Thyroid gland (tissue), 4 donors: ENCODE measurements at regions of chr14 and their contacts with region 1.

Region 1: DNA sequence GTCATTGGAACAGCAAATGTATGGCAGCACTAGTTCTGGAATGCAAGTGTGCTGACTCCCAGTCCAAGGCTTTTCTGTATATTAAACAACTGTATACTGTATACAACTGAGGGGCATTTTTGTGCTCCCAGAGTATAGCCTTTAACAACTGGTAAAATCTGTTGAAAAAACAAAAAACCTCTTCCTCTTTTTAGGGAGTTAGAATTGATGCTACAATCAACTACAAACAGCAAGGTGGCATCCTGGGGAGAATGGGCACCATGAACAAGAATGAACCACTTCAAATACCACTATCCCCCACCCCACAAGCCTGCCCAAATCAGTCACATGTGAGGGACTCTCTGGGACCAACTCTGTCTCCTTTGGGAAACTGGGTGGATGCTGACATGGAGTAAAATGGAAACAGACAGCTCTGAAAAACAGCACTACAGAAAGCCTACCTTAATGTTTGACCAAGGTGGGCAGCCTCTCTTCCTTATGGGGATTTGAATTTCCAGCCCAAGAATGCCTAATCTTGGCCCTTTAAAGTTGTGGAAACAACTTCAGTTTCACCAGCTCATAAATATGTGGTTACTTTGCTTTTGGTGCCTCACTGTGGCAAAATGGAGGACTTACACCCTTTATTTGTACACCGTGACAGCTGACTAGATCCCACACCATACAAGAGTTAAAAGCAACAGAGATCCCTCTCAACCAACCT is 7.5 kb downstream of the VTI1B start:
- DNase-seq: peak; percentile 34 to 35
- H3K4me3 ChIP-seq: no peak overlapping the region
- H3K27ac ChIP-seq: peak overlapping the region in 2 of 3 donors; percentile 43 to 60
- H3K4me1 ChIP-seq: peaks cover 11 to 19% of the 10 kb centered on the region in 2 donors
- H3K27me3 ChIP-seq: no peaks in the 10 kb centered on the region
- CTCF ChIP-seq: peak in 5 of 6 experiments; percentile 30 to 93 (median 84)
- POLR2A ChIP-seq: no peak

Region 2: DNA sequence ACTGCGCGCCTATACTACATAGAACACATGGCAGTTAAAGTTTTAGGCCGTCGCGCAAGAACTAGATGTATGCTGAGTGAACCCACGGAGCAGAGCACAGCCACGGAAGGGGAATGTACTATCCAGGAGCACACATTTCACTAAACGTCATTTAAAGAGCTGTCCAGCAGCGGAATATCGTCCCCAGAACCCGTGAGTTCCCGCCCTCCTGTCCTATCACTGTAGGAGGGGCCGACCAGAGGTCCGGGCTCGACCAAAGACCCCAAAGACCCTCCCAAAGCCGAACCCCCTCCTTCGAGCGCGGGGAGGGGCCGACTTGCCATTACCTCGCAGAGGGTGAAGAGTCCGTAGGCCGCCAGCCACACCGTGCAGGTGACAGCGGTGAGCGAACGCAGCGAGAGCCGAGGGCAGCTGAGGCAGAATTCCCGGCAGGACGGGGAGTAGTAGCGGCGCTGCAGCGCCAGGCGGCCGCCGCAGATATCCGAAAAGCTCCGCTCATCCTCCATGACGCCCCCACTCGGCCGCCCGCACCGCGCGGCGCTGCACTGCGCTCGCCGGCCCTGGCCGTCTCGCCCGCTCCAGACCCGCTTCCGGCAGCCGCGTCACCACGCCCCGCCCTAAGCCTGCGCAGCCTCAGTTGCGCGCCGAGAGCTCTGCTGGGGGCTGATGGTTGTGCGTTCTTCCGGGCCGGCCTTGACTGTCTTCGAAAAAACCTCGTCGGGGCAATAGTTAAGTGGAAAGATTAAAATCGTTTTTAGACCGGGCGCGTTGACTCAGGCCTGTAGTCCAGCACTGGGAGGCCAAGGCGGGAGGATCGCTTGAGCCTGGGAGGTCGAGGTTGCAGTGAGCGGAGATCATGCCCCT is 67.0 kb before region 1 on chr14 and contains the start of gene PIGH:
- intact Hi-C with region 1: no loop called
- DNase-seq: peak; percentile 84 to 89
- H3K4me3 ChIP-seq: peak within 1 kb of the TSS; percentile 72 to 85 (median 77)
- H3K27ac ChIP-seq: peak within 1 kb of the TSS; percentile 81 to 96 (median 90)
- H3K4me1 ChIP-seq: peaks cover 13 to 30% of the 10 kb centered on the region in 2 donors
- H3K27me3 ChIP-seq: no peaks in the 10 kb centered on the region
- CTCF ChIP-seq: peak; percentile 24 to 58 (median 44)
- POLR2A ChIP-seq: peak; percentile 69 to 98
- total RNA-seq, gene PIGH: 43.0 to 103 (median 63.1) TPM

Region 3: GRCh38 chr14:67619446-67620216 is 47.3 kb before region 1 on chr14 and contains the start of gene ARG2:
- intact Hi-C with region 1: loop called (anchors 10 kb)
- DNase-seq: peak; percentile 100
- H3K4me3 ChIP-seq: peak within 1 kb of the TSS; percentile 13 to 80 (median 75)
- H3K27ac ChIP-seq: peak within 1 kb of the TSS; percentile 87 to 96 (median 93)
- H3K4me1 ChIP-seq: peaks cover 38 to 51% of the 10 kb centered on the region in 2 donors
- H3K27me3 ChIP-seq: no peaks in the 10 kb centered on the region
- CTCF ChIP-seq: no peak
- POLR2A ChIP-seq: peak; percentile 97 to 99
- total RNA-seq, gene ARG2: 76.1 to 160 (median 95.0) TPM

Region 4: GRCh38 chr14:67719866-67720265 is 53.0 kb after region 1 on chr14:
- intact Hi-C with region 1: no loop called
- DNase-seq: no peak
- H3K4me3 ChIP-seq: no peak overlapping the region
- H3K27ac ChIP-seq: no peak overlapping the region
- H3K4me1 ChIP-seq: peaks cover 0 to 9% of the 10 kb centered on the region in 2 donors
- H3K27me3 ChIP-seq: no peaks in the 10 kb centered on the region
- CTCF ChIP-seq: no peak
- POLR2A ChIP-seq: no peak